ENCODE measurements at regions of chr4 and their contacts with region 1.

Region 1: DNA sequence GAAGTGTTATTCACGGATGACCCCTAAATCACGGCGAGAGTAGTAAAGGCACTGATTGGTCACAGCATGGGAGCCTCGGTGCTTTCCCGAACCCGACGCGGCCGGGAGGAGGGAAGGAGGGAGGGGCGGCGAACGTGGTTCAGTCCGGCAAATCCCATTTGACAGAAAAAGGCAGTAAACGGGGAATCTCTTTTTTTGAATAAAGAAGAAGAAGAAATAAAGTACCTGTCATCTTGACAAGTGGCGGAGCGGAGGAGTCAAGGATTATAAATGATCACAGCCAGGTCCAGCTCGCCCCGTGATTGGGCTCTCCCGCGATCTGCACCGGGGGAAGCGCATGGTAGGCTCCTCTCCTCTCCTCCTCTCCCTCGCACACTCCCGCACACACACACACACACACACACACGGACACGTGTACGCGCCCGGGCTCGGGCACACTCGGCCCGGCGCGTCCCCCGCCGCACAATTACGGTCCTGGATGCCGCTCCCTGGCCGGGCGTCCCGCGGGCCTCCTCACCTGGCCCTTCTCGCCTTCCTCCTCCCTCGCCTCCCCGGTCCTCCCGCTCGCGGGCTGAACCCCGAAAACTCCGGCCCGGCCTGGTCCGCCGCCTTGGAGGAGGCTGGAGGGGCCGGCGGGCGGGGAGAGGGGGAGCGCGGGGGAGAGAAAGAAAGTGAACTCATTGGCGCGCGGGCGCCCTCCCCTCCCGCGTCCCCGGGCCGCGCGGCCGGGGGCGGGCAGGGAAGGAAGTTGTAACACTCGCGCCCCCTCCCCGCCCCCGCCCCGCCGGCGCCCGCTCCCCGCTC is 99.2 kb upstream of the TENM3 start:
- DNase-seq: no peak
- H3K4me3 Mint-ChIP-seq: peak overlapping the region; percentile 74
- H3K27ac Mint-ChIP-seq: peak overlapping the region; percentile 41
- H3K4me1 Mint-ChIP-seq: peaks cover 18% of the 10 kb centered on the region
- H3K27me3 Mint-ChIP-seq: peaks cover 67% of the 10 kb centered on the region

Region 2: GRCh38 chr4:182448281-182449151 is 304.5 kb after region 1 on chr4:
- intact Hi-C with region 1: loop called (anchors 5 kb)
- DNase-seq: peak; percentile 75
- H3K4me3 Mint-ChIP-seq: peak overlapping the region; percentile 68
- H3K27ac Mint-ChIP-seq: no peak overlapping the region
- H3K4me1 Mint-ChIP-seq: peaks cover 3% of the 10 kb centered on the region
- H3K27me3 Mint-ChIP-seq: peaks cover 54% of the 10 kb centered on the region

Measured in activated CD4-positive, alpha-beta T cell treated with anti-CD3 and anti-CD28 coated beads, Interleukin-2, amount 10 ng/mL, durations not matched to agents 24 days and 14 days (primary cell).